Natural killer cell (primary cell): ENCODE measurements at regions of chr9 and their contacts with region 1.

Region 1: DNA sequence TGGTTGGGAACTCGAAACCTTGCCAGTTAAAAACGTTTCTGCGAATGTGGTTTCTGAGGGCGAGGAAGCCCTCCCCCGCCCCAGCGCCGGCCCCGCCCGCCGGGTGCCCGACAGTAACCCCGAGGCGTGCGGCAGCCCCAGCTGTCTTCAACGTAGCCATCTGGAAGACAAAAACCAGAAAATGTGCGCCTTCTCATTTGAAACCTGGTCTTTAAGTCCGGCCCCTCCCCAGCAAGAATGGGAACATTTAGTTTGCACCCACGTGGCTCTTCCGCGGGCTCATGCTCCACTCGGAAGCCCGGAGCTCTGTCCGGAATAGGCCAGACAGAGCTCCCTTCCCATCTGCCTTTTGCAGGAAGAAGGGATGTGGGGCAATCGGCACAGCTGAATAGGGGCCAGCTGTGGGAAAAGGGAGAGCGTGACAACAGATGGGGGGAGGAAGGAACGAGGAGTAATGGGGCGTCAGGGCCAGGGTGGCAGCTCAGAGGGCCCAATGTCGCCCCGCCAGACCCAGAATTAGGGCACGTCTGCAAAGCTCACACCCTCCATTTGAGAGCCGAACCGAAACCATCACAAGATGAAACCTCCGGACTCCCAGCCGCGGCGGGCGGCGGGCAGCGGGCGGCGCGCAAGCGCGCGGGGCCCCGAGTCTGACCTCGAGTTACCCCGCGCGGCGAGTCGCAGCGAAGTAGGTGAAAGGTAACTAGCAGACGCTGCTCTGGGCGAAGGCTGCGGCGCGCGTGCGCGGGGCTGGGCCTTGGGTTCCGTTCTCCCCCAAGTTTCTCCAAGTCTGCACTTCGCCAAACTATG is 63.4 kb upstream of the ABCA1 start:
- DNase-seq: peak; percentile 87 to 92
- ATAC-seq: peak; percentile 76 to 91 (median 86)
- H3K4me3 ChIP-seq: peak overlapping the region; percentile 69
- H3K4me3 Mint-ChIP-seq: peak overlapping the region; percentile 90
- H3K27ac ChIP-seq: peak overlapping the region; percentile 85
- H3K27ac Mint-ChIP-seq: peak overlapping the region; percentile 94 to 97
- H3K4me1 ChIP-seq: peaks cover 37% of the 10 kb centered on the region
- H3K4me1 Mint-ChIP-seq: peaks cover 35 to 40% of the 10 kb centered on the region in 2 donors
- H3K27me3 ChIP-seq: peaks cover 5% of the 10 kb centered on the region
- H3K27me3 Mint-ChIP-seq: peaks cover 16 to 25% of the 10 kb centered on the region in 2 donors
- CTCF ChIP-seq: no peak

Region 2: DNA sequence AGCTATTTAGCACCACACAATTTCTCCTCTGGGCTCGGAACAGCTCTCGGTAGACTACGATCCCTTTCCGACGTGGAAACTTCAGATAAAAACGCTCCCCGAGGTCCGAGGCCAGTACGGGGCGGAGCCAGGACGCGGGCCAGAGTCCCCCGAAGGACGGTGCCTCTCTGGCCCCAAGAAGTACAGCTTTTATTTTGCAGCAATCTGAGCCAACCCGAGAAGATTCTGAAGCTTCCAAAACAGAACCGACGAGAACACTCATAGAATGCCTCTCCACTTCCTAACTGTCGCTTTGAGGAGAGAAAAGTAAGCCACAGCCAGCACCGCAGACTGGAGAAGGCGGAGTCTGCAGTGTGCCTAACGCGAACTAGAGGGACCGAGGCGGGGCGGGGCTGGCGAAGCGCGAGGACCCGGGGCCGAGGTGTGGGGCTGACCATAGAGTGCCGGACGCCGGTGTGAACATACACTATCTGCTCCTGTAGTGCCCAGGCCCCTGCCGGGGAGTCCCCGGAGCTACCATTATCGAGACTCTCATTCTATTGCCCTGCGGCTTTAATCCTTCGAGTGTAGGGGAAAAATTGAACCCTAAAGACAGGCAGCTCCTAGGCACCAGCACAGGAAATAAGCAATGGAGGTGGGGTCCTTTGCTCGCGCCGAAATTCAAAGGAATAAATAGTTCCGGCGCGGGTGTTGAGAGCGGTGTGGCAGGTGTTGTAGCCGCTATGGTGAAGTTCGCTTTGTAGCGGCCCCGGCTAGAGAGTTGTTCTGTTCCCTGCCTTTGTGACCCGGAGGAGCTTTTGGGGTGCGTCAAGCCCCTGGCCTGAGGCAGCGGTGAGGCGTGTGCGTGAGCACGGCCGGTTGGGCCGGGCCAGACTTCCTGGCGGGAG is 897.5 kb before region 1 on chr9 and contains the start of gene SMC2:
- intact Hi-C with region 1: loop called (anchors 5 kb)
- DNase-seq: peak; percentile 91 to 96
- ATAC-seq: peak; percentile 94 to 98 (median 96)
- H3K4me3 ChIP-seq: peak within 1 kb of the TSS; percentile 77
- H3K4me3 Mint-ChIP-seq: peak within 1 kb of the TSS; percentile 98
- H3K27ac ChIP-seq: peak within 1 kb of the TSS; percentile 95
- H3K27ac Mint-ChIP-seq: peak within 1 kb of the TSS; percentile 95
- H3K4me1 ChIP-seq: peaks cover 6% of the 10 kb centered on the region
- H3K4me1 Mint-ChIP-seq: peaks cover 17 to 34% of the 10 kb centered on the region in 2 donors
- H3K27me3 ChIP-seq: no peaks in the 10 kb centered on the region
- H3K27me3 Mint-ChIP-seq: peaks cover 3 to 13% of the 10 kb centered on the region in 2 donors
- CTCF ChIP-seq: no peak
- total RNA-seq, gene SMC2: 6.7 to 9.9 (median 9.5) TPM

Region 3: DNA sequence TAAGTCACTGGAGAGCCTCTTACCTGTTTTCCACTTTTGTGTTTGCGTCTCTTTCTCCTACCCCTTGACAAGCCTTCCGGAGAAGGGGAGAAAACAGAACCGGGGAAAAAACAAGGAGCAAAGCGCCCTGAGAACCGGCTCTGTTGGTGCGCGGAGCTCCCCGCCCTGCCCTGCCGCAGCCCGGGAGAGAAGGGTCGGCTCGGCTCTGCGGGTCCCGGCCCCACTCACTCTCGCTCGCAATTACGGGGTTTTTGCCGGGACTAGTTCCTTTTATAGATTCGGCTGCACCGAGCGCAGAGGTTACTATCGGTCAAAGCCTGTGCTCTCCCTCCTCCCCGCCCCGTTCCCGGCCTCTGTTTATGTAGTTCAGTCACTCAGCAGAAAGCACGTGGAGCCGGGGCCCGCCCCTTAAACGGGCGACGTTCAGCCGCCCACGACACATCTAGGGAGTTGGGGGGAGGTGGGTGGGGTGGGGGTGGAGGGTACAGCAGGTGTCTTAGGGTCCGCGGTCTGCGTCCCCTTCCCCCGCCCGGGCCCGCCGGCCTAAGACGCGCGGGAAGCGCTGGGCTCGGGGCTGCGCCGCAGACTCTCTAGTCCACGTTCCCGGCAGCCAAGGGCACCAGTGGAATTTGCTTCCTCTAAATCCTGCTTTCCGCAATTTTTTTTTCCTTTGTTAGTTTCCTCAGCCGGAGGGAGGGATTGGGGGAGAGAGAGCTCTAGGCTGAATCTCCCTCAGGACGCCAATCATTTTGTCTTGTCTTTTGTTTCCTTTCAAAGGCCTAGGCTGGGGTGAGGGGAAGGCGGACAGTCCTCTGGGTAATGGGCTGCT is 63.2 kb before region 1 on chr9 and contains the start of gene ABCA1:
- intact Hi-C with region 1: loop called (anchors 1 kb)
- DNase-seq: peak; percentile 35 to 84
- ATAC-seq: peak; percentile 58 to 70 (median 61)
- H3K4me3 ChIP-seq: peak within 1 kb of the TSS; percentile 53
- H3K4me3 Mint-ChIP-seq: peak within 1 kb of the TSS; percentile 88
- H3K27ac ChIP-seq: no peak within 1 kb of the TSS
- H3K27ac Mint-ChIP-seq: peak within 1 kb of the TSS in 1 of 2 donors; percentile 76
- H3K4me1 ChIP-seq: peaks cover 26% of the 10 kb centered on the region
- H3K4me1 Mint-ChIP-seq: peaks cover 25 to 27% of the 10 kb centered on the region in 2 donors
- H3K27me3 ChIP-seq: peaks cover 8% of the 10 kb centered on the region
- H3K27me3 Mint-ChIP-seq: peaks cover 22 to 24% of the 10 kb centered on the region in 2 donors
- CTCF ChIP-seq: no peak
- total RNA-seq, gene ABCA1: 1.9 to 10.8 (median 4.8) TPM

Region 4: DNA sequence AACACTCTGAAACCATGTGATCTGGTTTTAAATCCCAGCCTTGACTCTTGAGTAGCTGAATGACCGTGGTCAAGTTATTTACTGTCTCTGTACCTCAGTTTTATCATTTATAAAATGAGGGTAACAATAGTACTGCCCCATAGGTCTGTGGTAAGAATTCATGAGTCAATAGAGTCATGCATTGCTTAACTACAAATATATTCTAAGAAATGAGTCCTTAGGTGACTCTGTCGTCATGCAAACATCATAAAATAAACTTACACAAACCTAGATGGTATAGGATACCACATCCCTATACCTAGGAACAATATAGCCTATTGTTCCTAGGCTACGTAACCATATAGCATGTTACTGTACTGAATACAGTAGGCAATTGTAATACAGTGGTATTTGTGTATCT is 43.1 kb before region 1 on chr9:
- intact Hi-C with region 1: no loop called
- DNase-seq: no peak
- ATAC-seq: no peak
- H3K4me3 ChIP-seq: no peak overlapping the region
- H3K4me3 Mint-ChIP-seq: no peak overlapping the region
- H3K27ac ChIP-seq: no peak overlapping the region
- H3K27ac Mint-ChIP-seq: no peak overlapping the region
- H3K4me1 ChIP-seq: no peaks in the 10 kb centered on the region
- H3K4me1 Mint-ChIP-seq: no peaks in the 10 kb centered on the region
- H3K27me3 ChIP-seq: no peaks in the 10 kb centered on the region
- H3K27me3 Mint-ChIP-seq: peaks cover 0 to 2% of the 10 kb centered on the region in 2 donors
- CTCF ChIP-seq: no peak

Region 5: DNA sequence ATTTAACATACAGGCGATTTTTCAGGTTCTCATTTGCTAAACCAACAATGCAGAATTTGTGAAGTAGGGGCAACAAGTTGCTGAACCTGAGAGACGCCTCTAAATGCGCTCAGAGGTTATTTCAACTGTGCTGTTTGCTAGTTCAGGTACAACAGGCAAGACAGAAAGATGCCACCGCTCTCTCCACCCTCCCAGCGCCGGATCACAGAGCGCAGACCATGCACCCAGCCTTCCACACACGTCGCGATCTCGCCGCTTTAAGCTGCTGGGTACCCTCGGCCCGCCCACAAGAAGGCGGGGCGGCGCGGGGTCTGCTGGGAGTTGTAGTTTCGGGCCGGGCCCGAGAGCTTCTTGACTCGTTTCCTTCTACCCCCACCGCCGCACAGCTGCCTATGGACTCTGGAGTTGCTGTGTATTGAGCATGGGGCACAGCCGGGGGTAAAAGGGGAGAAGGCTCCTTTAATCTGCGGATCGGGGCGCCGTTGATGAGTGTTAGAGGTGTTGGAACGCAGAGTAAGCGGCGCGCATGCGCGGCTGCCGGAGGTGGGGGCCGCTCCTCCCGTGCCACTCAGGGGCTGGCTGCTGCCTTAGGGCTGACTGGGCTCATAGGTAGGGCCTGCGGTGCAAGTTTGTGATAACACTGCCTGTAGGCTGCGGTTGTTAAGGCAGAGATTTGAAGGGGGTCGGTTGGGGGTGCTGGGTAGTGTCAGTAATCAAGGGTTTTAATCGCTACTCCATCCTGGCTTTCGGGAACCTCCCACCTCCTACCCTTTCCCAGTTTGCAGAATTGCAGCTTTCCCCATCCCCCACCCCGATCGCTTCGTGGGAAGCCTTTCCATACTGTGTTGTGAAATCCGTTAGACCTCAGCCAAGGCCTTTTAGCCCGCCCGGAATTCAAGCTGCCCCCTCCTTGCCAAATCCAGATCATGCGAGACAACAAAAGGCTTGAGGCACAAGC is 23.0 kb before region 1 on chr9:
- intact Hi-C with region 1: loop called (anchors 1 kb)
- DNase-seq: peak; percentile 88 to 91
- ATAC-seq: peak; percentile 98
- H3K4me3 ChIP-seq: peak overlapping the region; percentile 71
- H3K4me3 Mint-ChIP-seq: peak overlapping the region; percentile 97
- H3K27ac ChIP-seq: peak overlapping the region; percentile 41
- H3K27ac Mint-ChIP-seq: peak overlapping the region; percentile 81 to 86
- H3K4me1 ChIP-seq: peaks cover 13% of the 10 kb centered on the region
- H3K4me1 Mint-ChIP-seq: peaks cover 12 to 14% of the 10 kb centered on the region in 2 donors
- H3K27me3 ChIP-seq: no peaks in the 10 kb centered on the region
- H3K27me3 Mint-ChIP-seq: peaks cover 27 to 35% of the 10 kb centered on the region in 2 donors
- CTCF ChIP-seq: no peak

Region 6: GRCh38 chr9:105244003-105244733 is 252.8 kb after region 1 on chr9 and contains the start of gene SLC44A1:
- intact Hi-C with region 1: loop called (anchors 2 kb)
- DNase-seq: peak; percentile 82 to 94
- ATAC-seq: peak; percentile 81 to 92 (median 86)
- H3K4me3 ChIP-seq: peak within 1 kb of the TSS; percentile 70
- H3K4me3 Mint-ChIP-seq: peak within 1 kb of the TSS; percentile 95
- H3K27ac ChIP-seq: peak within 1 kb of the TSS; percentile 54
- H3K27ac Mint-ChIP-seq: peak within 1 kb of the TSS; percentile 74 to 95
- H3K4me1 ChIP-seq: peaks cover 12% of the 10 kb centered on the region
- H3K4me1 Mint-ChIP-seq: peaks cover 29 to 36% of the 10 kb centered on the region in 2 donors
- H3K27me3 ChIP-seq: peaks cover 8% of the 10 kb centered on the region
- H3K27me3 Mint-ChIP-seq: peaks cover 15 to 30% of the 10 kb centered on the region in 2 donors
- CTCF ChIP-seq: no peak
- total RNA-seq, gene SLC44A1: 7.1 to 8.3 (median 7.9) TPM

Region 7: GRCh38 chr9:105694190-105694847 is 703.0 kb after region 1 on chr9 and contains the start of gene TMEM38B:
- intact Hi-C with region 1: loop called (anchors 10 kb)
- DNase-seq: peak; percentile 79 to 93
- ATAC-seq: peak; percentile 81 to 92 (median 89)
- H3K4me3 ChIP-seq: peak within 1 kb of the TSS; percentile 73
- H3K4me3 Mint-ChIP-seq: peak within 1 kb of the TSS; percentile 83
- H3K27ac ChIP-seq: peak within 1 kb of the TSS; percentile 50
- H3K27ac Mint-ChIP-seq: peak within 1 kb of the TSS; percentile 27 to 84
- H3K4me1 ChIP-seq: peaks cover 7% of the 10 kb centered on the region
- H3K4me1 Mint-ChIP-seq: peaks cover 18 to 19% of the 10 kb centered on the region in 2 donors
- H3K27me3 ChIP-seq: peaks cover 18% of the 10 kb centered on the region
- H3K27me3 Mint-ChIP-seq: peaks cover 23 to 26% of the 10 kb centered on the region in 2 donors
- CTCF ChIP-seq: no peak
- total RNA-seq, gene TMEM38B: 5.7 to 8.0 (median 8.0) TPM